BJ (cell line): ENCODE measurements at regions of chr3 and their contacts with region 1.

Region 1: DNA sequence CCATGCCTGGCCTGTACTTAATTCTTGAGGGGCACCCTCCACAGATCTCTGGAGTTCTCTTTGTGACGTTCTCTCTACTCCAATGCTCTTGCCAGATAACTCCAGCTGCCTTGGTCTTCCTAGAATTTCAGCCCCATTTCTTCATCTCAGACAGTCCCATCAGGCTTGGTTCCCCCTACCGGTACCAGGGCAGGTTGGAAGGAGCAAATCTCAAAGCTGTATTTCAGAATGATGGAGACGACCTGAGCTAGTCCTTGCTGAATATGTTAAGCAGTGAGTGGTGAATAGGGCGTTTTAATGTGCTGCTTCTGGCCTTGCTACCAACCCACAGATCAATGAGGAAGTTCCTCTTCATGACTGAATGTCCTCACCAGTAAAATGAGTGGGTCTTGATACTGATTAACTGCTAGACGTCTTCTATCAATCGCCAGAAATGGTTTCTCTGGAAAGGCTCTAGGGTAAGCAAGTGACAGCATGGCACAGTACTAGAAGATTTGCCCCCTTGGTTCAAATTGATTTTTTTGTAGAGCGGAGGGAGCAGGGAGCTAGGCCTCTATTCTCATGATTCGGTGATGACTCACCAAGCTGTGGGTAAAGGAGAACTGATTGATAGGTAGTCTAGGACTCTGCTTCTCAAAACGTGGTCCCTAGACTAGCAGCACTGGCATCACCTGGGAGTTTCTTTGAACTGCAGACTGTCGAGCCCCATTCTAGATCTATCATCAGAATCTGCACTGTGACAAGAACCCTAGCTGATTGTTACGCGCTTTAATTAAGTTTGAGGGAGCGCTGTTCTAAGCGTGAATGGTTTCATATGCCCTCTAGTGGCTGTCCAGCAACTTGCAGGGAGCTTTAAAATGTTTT is 67.8 kb downstream of the UBP1 start:
- DNase-seq: no peak
- H3K4me3 ChIP-seq: no peak overlapping the region
- H3K27me3 ChIP-seq: no peaks in the 10 kb centered on the region
- CTCF ChIP-seq: peak; percentile 85

Region 2: DNA sequence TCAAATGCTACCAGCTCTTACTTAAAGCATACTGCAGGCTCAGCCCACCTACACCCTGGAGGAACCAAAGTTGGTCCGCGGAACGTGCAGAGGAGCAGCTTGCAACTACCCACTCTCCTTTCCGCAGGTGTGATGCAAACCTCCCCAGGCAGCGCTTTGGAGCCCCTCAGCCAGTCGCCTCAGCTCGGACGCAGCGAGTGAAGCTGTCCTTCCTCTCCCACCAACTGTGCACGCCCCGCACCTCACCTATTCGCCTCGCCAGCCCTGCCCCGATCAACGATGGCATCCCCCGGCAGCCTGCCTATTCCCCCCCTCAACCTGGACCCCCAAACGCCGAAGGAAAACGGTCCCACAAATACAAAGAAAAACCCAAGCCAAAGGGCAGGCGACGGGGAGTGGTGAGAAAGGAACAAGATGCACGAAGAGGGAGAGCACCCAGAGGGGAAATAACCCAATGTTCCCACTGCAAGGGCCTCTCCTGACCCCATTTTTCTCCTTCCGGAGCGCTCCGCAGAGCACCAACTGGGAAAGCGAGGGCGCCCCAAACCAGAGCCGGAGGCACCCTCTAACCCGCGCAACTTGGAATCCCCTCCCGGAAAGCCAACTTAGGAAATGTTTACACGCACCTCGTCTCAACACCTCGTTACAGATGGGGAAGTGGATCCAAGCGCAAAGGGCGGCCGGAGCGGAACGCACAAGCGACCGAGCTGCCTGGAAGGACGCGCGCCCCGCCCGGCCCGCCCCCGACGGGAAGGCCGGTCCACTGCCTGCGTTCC is 276.2 kb before region 1 on chr3:
- CTCF ChIA-PET with region 1: interaction called, 10 read pairs
- POLR2A ChIA-PET with region 1: no interaction called
- DNase-seq: no peak
- H3K4me3 ChIP-seq: peak overlapping the region; percentile 60
- H3K27me3 ChIP-seq: no peaks in the 10 kb centered on the region
- CTCF ChIP-seq: no peak

Region 3: DNA sequence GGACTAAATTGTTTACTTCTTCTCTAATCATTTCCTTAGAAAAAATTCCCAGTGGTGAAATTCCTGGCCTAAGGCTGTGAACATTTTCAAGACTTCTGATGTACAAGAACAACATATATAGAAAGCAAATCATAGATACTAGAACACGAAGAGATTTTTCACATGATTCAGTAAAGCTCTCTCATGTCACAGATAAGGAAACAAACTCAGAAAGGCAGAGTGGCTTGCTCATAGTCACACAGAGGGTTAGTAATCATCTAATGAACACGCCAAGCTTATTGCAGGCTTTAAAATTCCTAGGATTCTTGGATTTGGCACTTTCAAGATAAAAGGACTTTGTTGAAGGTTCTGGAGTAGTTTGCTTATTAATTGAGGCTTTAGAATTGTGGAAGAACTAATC is 232.5 kb before region 1 on chr3:
- CTCF ChIA-PET with region 1: interaction called, 184 read pairs
- POLR2A ChIA-PET with region 1: no interaction called
- DNase-seq: no peak
- H3K4me3 ChIP-seq: no peak overlapping the region
- H3K27me3 ChIP-seq: no peaks in the 10 kb centered on the region
- CTCF ChIP-seq: no peak

Region 4: DNA sequence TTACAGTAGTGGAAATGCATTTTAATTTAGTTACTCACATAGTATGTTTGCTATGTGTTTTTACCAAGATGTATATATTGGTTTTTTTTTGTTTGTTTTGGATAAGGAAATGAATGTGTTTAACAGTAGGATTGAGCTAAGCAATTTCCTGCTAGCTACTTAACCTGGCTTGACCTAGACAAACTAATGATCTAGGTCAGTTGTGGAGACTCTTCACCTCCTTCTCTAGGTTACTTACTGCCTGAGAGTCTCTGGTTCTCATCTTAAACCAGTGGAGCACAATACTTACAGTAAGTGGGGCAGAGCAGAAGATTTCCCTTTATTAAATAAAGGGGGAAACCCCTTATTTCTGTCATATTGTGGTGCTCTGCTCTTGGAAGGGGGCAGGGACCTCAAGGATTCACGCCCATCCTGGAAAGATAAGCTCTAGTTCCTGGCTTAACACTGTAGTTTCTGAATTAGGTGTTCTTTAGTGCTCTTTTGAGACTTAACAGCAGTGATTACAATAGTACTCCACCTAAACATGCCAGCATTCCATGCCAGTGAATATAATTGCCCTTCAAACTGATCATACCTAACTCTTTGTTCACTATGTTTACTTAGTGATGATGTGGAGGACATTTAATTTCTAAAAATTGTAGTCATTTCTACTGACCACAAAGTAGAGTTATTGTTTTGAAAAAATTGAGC is 12.2 kb before region 1 on chr3:
- CTCF ChIA-PET with region 1: interaction called, 24 read pairs
- POLR2A ChIA-PET with region 1: no interaction called
- DNase-seq: no peak
- H3K4me3 ChIP-seq: no peak overlapping the region
- H3K27me3 ChIP-seq: no peaks in the 10 kb centered on the region
- CTCF ChIP-seq: no peak